ENCODE measurements at regions of chr5 and their contacts with region 1.

Region 1: DNA sequence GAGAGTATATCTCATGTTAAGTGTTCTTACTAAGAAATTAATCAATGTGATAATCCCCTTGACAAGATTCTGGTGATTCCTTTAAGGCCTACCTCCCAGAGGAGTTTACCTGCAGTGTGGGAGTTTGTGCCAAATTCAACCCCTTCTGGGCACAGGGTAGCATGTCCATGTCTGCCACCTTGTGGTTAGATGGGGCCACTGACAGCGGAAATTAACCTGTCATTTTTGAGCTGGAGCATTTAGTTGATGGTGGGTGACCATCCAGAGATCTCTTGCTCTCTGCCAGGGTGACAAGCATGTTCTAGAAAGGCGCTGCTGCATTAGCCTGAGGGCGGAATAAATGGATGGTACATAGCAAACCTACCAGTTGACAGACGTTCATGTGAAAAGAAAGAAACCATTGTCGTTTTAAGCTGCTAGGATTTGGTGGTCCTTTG is 132.2 kb downstream of the FBXO4 start:
- DNase-seq: peak; percentile 68
- H3K4me3 Mint-ChIP-seq: no peak overlapping the region
- H3K27ac Mint-ChIP-seq: no peak overlapping the region
- H3K4me1 Mint-ChIP-seq: no peaks in the 10 kb centered on the region
- H3K27me3 Mint-ChIP-seq: peaks cover 4% of the 10 kb centered on the region

Region 2: GRCh38 chr5:41809128-41809527 is 248.1 kb before region 1 on chr5:
- CTCF ChIA-PET with region 1: interaction called, 12 read pairs
- POLR2A ChIA-PET with region 1: no interaction called
- intact Hi-C with region 1: no loop called
- DNase-seq: no peak
- H3K4me3 Mint-ChIP-seq: no peak overlapping the region
- H3K27ac Mint-ChIP-seq: no peak overlapping the region
- H3K4me1 Mint-ChIP-seq: peaks cover 35% of the 10 kb centered on the region
- H3K27me3 Mint-ChIP-seq: no peaks in the 10 kb centered on the region

Region 3: GRCh38 chr5:41863871-41864486 is 193.3 kb before region 1 on chr5:
- CTCF ChIA-PET with region 1: interaction called, 169 read pairs
- POLR2A ChIA-PET with region 1: no interaction called
- intact Hi-C with region 1: no loop called
- DNase-seq: no peak
- H3K4me3 Mint-ChIP-seq: peak overlapping the region; percentile 61
- H3K27ac Mint-ChIP-seq: peak overlapping the region; percentile 91
- H3K4me1 Mint-ChIP-seq: peaks cover 75% of the 10 kb centered on the region
- H3K27me3 Mint-ChIP-seq: no peaks in the 10 kb centered on the region

Region 4: DNA sequence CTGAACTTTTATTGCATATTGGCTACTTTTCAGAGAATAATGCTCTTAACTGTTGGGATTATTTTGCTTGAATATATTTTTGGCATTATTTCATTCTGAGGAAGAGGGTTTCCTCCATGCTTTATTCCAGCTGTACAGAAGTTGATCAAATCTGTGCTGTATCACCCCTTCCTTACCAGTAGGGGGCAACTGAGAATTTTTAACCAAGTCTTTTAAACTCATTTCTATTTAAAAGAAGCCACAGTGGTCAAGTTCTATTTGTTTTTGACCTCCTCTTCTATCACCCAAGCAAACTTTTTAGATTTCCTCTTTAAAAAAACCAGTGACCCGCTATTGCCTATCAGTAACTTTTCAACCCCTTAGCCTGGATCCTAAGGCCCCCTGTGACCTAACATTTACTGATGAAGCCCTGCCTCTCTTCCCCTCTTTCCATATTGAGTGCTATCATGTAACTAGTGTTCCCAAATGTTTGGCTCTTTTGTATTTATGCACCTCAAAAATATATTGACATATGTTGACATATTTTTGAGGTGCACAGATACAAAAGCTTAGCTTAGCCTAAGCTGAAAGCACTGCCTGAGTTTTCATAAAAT is 51.6 kb before region 1 on chr5:
- CTCF ChIA-PET with region 1: interaction called, 23 read pairs
- POLR2A ChIA-PET with region 1: no interaction called
- intact Hi-C with region 1: loop called (anchors 2 kb)
- DNase-seq: no peak
- H3K4me3 Mint-ChIP-seq: no peak overlapping the region
- H3K27ac Mint-ChIP-seq: no peak overlapping the region
- H3K4me1 Mint-ChIP-seq: no peaks in the 10 kb centered on the region
- H3K27me3 Mint-ChIP-seq: peaks cover 3% of the 10 kb centered on the region

Region 5: DNA sequence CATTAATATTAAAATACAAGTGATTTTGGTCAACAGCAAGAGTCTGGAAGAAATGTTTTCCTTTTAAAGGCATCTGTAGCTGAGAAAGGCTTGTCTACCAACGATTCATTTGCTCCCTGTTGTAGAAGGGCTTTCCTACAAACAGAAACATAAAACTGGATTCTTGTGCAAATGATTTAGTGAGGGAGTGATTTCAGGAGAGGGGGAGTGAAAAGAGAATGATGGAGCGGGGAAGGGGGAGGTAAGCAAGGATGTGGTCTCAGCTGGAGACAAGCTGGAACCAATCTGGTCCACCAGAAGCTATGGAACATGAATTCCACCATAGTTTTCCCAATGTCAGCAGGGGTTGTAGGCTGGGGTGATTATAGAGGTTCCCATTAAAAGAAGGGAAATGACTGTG is 64.1 kb after region 1 on chr5:
- CTCF ChIA-PET with region 1: no interaction called
- POLR2A ChIA-PET with region 1: no interaction called
- intact Hi-C with region 1: no loop called
- DNase-seq: no peak
- H3K4me3 Mint-ChIP-seq: no peak overlapping the region
- H3K27ac Mint-ChIP-seq: no peak overlapping the region
- H3K4me1 Mint-ChIP-seq: no peaks in the 10 kb centered on the region
- H3K27me3 Mint-ChIP-seq: no peaks in the 10 kb centered on the region

Region 6: DNA sequence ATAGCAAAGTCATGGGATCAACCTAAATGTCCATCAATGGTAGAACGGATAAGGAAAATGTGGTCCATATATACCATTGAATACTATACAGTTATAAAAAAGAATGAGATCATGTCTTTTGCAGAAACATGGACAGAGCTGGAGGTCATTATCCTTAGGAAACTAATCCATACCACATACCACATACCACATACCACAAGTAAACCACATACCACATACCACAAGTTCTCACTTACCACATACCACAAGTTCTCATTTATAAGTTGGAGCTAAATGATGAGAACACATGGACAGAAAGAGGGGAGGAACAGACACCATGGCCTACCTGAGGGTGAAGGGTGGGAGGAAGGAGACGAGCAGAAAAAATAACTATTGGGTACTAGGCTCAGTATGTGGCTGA is 211.4 kb after region 1 on chr5:
- CTCF ChIA-PET with region 1: no interaction called
- POLR2A ChIA-PET with region 1: no interaction called
- intact Hi-C with region 1: no loop called
- DNase-seq: no peak
- H3K4me3 Mint-ChIP-seq: no peak overlapping the region
- H3K27ac Mint-ChIP-seq: no peak overlapping the region
- H3K4me1 Mint-ChIP-seq: no peaks in the 10 kb centered on the region
- H3K27me3 Mint-ChIP-seq: no peaks in the 10 kb centered on the region

Region 7: DNA sequence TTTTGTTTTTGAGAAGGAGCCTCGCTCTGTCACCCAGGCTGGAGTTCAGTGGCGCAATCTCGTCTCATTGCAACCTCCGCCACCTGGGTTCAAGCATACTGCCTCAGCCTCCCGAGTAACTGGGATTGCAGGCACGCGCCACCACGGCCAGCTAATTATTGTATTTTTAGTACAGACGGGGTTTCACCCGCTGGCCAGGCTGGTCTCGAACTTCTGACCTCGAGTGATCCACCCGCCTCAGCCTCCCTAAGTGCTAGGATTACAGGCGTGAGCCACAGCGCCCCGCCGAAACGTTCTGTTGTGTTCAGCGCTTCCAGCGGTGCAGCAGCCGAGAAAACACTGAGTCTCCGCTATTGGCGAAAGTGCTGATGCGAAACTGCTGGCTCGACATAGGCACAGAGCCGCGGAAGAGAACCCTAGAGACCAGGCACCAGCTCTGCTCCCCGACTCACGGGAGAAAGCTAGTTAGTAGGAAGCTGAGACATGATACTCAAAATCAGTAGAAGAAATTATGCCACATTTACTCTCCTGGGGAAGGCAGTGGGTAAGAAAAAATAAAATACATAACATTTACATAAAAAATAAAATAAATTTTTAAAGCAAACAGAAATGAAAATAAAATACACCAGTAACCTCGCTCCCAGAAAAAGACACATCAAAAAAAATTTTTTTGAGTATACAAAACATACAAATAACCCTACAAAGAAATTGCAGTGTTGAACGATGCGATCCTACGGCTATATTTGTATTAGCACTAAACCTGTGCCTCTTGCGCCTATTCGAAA is 951.3 kb after region 1 on chr5:
- CTCF ChIA-PET with region 1: no interaction called
- POLR2A ChIA-PET with region 1: no interaction called
- intact Hi-C with region 1: no loop called
- DNase-seq: peak; percentile 93
- H3K4me3 Mint-ChIP-seq: peak overlapping the region; percentile 81
- H3K27ac Mint-ChIP-seq: peak overlapping the region; percentile 88
- H3K4me1 Mint-ChIP-seq: peaks cover 26% of the 10 kb centered on the region
- H3K27me3 Mint-ChIP-seq: no peaks in the 10 kb centered on the region

Measured in activated CD4-positive, alpha-beta memory T cell treated with anti-CD3 and anti-CD28 coated beads for 36 hours (primary cell).